ENCODE measurements at regions of chr18 and their contacts with region 1.

Region 1: DNA sequence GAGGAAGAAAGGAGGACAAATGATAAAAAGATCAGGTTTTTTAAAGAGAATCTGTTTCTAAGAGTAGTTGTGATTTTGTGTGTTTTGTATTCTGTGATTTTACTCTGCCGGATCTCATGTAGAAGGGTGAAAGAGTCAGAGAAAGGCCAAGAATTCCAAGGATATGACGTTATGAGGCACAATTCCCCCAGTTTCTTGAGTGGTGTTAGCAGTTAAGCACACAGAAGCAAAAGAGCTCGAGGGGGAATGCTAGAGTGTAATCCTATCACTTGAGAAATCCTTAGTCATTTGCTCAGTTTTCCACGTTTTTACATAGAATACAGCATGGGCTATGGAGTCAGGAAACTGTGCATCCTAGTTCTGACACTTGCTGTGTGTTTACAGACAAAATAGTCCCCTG is 34.8 kb downstream of the METTL4 start:
- DNase-seq: no peak
- ATAC-seq: no peak
- H3K4me3 ChIP-seq: no peak overlapping the region
- H3K4me3 Mint-ChIP-seq: peak overlapping the region; percentile 11
- H3K27ac ChIP-seq: no peak overlapping the region
- H3K27ac Mint-ChIP-seq: peak overlapping the region; percentile 22
- H3K4me1 ChIP-seq: peaks cover 25 to 28% of the 10 kb centered on the region in 2 donors
- H3K4me1 Mint-ChIP-seq: peaks cover 35% of the 10 kb centered on the region
- H3K27me3 ChIP-seq: no peaks in the 10 kb centered on the region
- H3K27me3 Mint-ChIP-seq: no peaks in the 10 kb centered on the region
- CTCF ChIP-seq: no peak

Region 2: GRCh38 chr18:741931-742512 is 1794.5 kb before region 1 on chr18:
- CTCF ChIA-PET with region 1: no interaction called
- POLR2A ChIA-PET with region 1: no interaction called
- intact Hi-C with region 1: loop called (anchors 5 kb)
- DNase-seq: peak; percentile 41
- ATAC-seq: peak; percentile 60
- H3K4me3 ChIP-seq: no peak overlapping the region
- H3K4me3 Mint-ChIP-seq: no peak overlapping the region
- H3K27ac ChIP-seq: no peak overlapping the region
- H3K27ac Mint-ChIP-seq: no peak overlapping the region
- H3K4me1 ChIP-seq: no peaks in the 10 kb centered on the region
- H3K4me1 Mint-ChIP-seq: no peaks in the 10 kb centered on the region
- H3K27me3 ChIP-seq: no peaks in the 10 kb centered on the region
- H3K27me3 Mint-ChIP-seq: peaks cover 2% of the 10 kb centered on the region
- CTCF ChIP-seq: peak; percentile 83

Region 3: DNA sequence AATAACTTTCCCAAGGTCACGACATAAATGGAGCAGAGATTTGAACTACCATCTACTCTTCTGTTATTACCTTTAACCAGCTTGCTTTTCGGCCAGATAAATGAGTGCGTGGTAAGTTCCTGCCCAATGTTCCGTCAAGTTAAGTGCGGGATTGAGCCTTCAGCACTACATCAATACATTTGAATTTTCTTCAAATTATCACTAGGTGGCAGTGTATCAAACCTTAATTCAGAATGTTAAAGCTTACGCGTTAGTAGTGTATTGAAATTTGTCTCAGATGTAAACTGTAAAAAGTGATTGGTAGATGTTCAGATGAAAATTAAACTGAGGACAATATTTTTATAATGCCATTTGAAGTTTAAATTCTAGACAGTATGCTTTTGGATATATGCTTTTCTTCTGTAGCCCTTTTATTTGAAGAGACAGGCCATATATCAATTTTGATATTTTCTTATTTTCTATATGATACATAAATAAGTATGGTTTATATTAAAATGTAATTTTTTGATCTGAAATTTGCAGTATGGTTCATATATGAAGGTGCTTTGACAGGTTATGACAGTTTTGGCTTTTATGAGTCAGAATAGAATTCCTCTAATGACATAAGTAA is 950.5 kb before region 1 on chr18:
- CTCF ChIA-PET with region 1: interaction called, 29 read pairs
- POLR2A ChIA-PET with region 1: no interaction called
- intact Hi-C with region 1: no loop called
- DNase-seq: peak; percentile 36
- ATAC-seq: peak; percentile 41
- H3K4me3 ChIP-seq: no peak overlapping the region
- H3K4me3 Mint-ChIP-seq: no peak overlapping the region
- H3K27ac ChIP-seq: no peak overlapping the region
- H3K27ac Mint-ChIP-seq: no peak overlapping the region
- H3K4me1 ChIP-seq: no peaks in the 10 kb centered on the region
- H3K4me1 Mint-ChIP-seq: no peaks in the 10 kb centered on the region
- H3K27me3 ChIP-seq: no peaks in the 10 kb centered on the region
- H3K27me3 Mint-ChIP-seq: no peaks in the 10 kb centered on the region
- CTCF ChIP-seq: peak; percentile 77

Region 4: GRCh38 chr18:2337552-2338141 is 198.8 kb before region 1 on chr18:
- CTCF ChIA-PET with region 1: interaction called, 89 read pairs
- POLR2A ChIA-PET with region 1: no interaction called
- intact Hi-C with region 1: no loop called
- DNase-seq: peak; percentile 52
- ATAC-seq: peak; percentile 54
- H3K4me3 ChIP-seq: no peak overlapping the region
- H3K4me3 Mint-ChIP-seq: no peak overlapping the region
- H3K27ac ChIP-seq: no peak overlapping the region
- H3K27ac Mint-ChIP-seq: no peak overlapping the region
- H3K4me1 ChIP-seq: no peaks in the 10 kb centered on the region
- H3K4me1 Mint-ChIP-seq: no peaks in the 10 kb centered on the region
- H3K27me3 ChIP-seq: peaks cover 0 to 4% (median 0%) of the 10 kb centered on the region in 4 experiments
- H3K27me3 Mint-ChIP-seq: peaks cover 33% of the 10 kb centered on the region
- CTCF ChIP-seq: peak; percentile 76

Measured in B cell (primary cell).